PC-9 (cell line): ENCODE measurements at regions of chr19 and their contacts with region 1.

Region 1: GRCh38 chr19:4028334-4029246 is 21.1 kb downstream of the PIAS4 start:
- DNase-seq: no peak
- H3K4me3 ChIP-seq: no peak overlapping the region
- H3K27ac ChIP-seq: no peak overlapping the region
- H3K4me1 ChIP-seq: no peaks in the 10 kb centered on the region
- H3K27me3 ChIP-seq: no peaks in the 10 kb centered on the region
- CTCF ChIP-seq: no peak

Region 2: DNA sequence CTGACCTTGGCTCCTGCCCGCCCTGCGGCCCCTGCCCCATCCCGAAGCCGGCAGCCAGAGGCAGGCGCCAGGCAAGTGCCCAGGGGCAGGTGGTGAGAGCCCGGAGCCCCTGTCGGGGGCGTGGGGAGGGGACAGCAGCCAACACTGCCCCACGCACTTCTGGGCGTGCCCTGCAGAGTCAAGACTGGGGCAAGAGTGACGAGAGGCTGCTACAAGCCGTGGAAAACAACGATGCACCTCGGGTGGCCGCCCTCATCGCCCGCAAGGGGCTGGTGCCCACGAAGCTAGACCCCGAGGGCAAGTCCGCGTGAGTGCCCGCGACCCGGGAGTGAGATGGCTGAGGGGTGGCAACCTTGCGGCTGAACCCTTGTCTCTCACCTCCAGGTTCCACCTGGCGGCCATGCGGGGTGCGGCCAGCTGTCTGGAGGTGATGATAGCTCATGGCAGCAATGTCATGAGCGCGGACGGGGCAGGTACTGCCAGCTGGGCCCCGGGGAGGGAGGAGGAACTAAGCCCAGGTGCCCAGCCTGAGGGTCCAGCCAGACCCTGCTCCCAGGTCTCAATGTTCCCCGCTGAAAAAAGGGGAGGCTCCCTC is 171.2 kb after region 1 on chr19:
- CTCF ChIA-PET with region 1: interaction called, 11 read pairs
- POLR2A ChIA-PET with region 1: no interaction called
- intact Hi-C with region 1: no loop called
- DNase-seq: no peak
- H3K4me3 ChIP-seq: no peak overlapping the region
- H3K27ac ChIP-seq: no peak overlapping the region
- H3K4me1 ChIP-seq: no peaks in the 10 kb centered on the region
- H3K27me3 ChIP-seq: no peaks in the 10 kb centered on the region
- CTCF ChIP-seq: peak; percentile 57